ENCODE measurements at regions of chr19 and their contacts with region 1.

Region 1: GRCh38 chr19:10380313-10381102 is at the start of gene TYK2:
- DNase-seq: peak; percentile 99
- ATAC-seq: peak; percentile 91
- H3K4me3 ChIP-seq: peak within 1 kb of the TSS; percentile 63 to 99 (median 90)
- H3K4me3 Mint-ChIP-seq: peak within 1 kb of the TSS; percentile 87
- H3K27ac ChIP-seq: peak within 1 kb of the TSS; percentile 78 to 91
- H3K27ac Mint-ChIP-seq: peak within 1 kb of the TSS; percentile 91
- H3K4me1 ChIP-seq: peaks cover 10 to 17% of the 10 kb centered on the region in 2 donors
- H3K4me1 Mint-ChIP-seq: peaks cover 21% of the 10 kb centered on the region
- H3K27me3 ChIP-seq: no peaks in the 10 kb centered on the region
- H3K27me3 Mint-ChIP-seq: no peaks in the 10 kb centered on the region
- CTCF ChIP-seq: no peak
- total RNA-seq, gene TYK2: 337 and 347 TPM in 2 replicates

Region 2: DNA sequence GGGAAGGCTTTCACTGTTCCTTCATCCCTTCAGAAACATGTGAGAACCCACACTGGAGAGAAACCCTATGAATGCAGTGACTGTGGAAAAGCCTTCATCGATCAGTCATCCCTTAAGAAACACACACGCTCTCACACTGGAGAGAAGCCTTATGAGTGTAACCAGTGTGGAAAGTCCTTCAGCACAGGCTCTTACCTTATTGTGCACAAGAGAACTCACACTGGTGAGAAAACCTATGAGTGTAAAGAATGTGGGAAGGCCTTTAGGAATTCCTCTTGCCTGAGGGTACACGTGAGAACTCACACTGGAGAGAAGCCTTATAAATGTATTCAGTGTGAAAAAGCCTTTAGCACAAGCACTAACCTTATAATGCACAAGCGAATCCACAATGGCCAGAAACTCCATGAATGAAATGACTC is 999.1 kb before region 1 on chr19:
- CTCF ChIA-PET with region 1: no interaction called
- POLR2A ChIA-PET with region 1: no interaction called
- intact Hi-C with region 1: no loop called
- DNase-seq: no peak
- ATAC-seq: no peak
- H3K4me3 ChIP-seq: no peak overlapping the region
- H3K4me3 Mint-ChIP-seq: no peak overlapping the region
- H3K27ac ChIP-seq: no peak overlapping the region
- H3K27ac Mint-ChIP-seq: no peak overlapping the region
- H3K4me1 ChIP-seq: no peaks in the 10 kb centered on the region
- H3K4me1 Mint-ChIP-seq: no peaks in the 10 kb centered on the region
- H3K27me3 ChIP-seq: no peaks in the 10 kb centered on the region
- H3K27me3 Mint-ChIP-seq: no peaks in the 10 kb centered on the region
- CTCF ChIP-seq: no peak

Region 3: DNA sequence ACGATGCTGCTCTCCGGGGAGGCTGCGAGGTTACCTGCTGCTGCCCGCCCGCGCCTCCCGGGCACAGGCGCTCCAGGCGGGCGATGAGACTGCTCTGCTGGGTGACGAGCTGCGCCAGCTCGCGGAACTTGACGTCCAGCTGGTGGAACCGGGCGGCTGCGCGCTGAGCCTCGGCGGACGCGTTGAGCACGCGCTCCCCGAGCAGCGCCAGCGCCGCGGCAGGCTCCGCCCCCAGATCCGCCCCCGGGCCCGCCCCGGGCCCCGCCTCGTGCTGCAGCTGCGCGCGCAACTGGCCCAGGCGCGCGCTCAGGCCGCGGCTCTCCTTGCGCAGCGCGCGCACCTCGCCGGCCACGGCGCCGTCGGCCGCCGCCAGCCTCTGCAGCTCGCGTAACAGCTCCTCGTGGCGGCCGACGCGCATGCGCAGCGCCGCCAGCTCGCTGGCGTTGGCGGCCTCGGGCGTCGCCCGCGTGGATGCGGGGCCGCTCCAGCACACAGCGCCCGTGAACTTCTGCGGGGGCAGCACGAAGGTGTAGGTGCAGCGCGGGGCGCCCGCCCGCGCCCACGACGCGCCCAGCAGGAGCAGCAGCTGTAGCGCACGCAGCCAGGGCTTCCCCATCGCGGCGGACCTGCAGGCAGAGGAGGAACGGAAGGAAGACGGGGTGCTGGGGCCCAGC is 284.4 kb before region 1 on chr19:
- CTCF ChIA-PET with region 1: no interaction called
- POLR2A ChIA-PET with region 1: no interaction called
- intact Hi-C with region 1: loop called (anchors 1 kb)
- DNase-seq: peak; percentile 96
- ATAC-seq: peak; percentile 91
- H3K4me3 ChIP-seq: peak overlapping the region in 4 of 5 experiments; percentile 40 to 55 (median 50)
- H3K4me3 Mint-ChIP-seq: peak overlapping the region; percentile 69
- H3K27ac ChIP-seq: peak overlapping the region; percentile 62 to 74
- H3K27ac Mint-ChIP-seq: peak overlapping the region; percentile 67
- H3K4me1 ChIP-seq: peaks cover 27 to 49% of the 10 kb centered on the region in 2 donors
- H3K4me1 Mint-ChIP-seq: peaks cover 39% of the 10 kb centered on the region
- H3K27me3 ChIP-seq: no peaks in the 10 kb centered on the region
- H3K27me3 Mint-ChIP-seq: no peaks in the 10 kb centered on the region
- CTCF ChIP-seq: no peak

Region 4: GRCh38 chr19:10461791-10462441 is 81.4 kb after region 1 on chr19:
- CTCF ChIA-PET with region 1: no interaction called
- POLR2A ChIA-PET with region 1: no interaction called
- intact Hi-C with region 1: no loop called
- DNase-seq: no peak
- ATAC-seq: no peak
- H3K4me3 ChIP-seq: peak overlapping the region in 4 of 5 experiments; percentile 28 to 62 (median 50)
- H3K4me3 Mint-ChIP-seq: peak overlapping the region; percentile 69
- H3K27ac ChIP-seq: no peak overlapping the region
- H3K27ac Mint-ChIP-seq: no peak overlapping the region
- H3K4me1 ChIP-seq: peaks cover 7 to 8% of the 10 kb centered on the region in 2 donors
- H3K4me1 Mint-ChIP-seq: peaks cover 11% of the 10 kb centered on the region
- H3K27me3 ChIP-seq: no peaks in the 10 kb centered on the region
- H3K27me3 Mint-ChIP-seq: no peaks in the 10 kb centered on the region
- CTCF ChIP-seq: no peak